Activated T-helper 2 cell treated with anti-CD3 and anti-CD28 coated beads, Interferon-gamma antibody, Interleukin-2, Interleukin-4, amounts not matched to agents 10 μg/mL and 5 μg/mL and 100 μg/mL, durations not matched to agents 14 hours and 24 hours and 36 hours (primary cell): ENCODE measurements at regions of chrX and their contacts with region 1.

Region 1: DNA sequence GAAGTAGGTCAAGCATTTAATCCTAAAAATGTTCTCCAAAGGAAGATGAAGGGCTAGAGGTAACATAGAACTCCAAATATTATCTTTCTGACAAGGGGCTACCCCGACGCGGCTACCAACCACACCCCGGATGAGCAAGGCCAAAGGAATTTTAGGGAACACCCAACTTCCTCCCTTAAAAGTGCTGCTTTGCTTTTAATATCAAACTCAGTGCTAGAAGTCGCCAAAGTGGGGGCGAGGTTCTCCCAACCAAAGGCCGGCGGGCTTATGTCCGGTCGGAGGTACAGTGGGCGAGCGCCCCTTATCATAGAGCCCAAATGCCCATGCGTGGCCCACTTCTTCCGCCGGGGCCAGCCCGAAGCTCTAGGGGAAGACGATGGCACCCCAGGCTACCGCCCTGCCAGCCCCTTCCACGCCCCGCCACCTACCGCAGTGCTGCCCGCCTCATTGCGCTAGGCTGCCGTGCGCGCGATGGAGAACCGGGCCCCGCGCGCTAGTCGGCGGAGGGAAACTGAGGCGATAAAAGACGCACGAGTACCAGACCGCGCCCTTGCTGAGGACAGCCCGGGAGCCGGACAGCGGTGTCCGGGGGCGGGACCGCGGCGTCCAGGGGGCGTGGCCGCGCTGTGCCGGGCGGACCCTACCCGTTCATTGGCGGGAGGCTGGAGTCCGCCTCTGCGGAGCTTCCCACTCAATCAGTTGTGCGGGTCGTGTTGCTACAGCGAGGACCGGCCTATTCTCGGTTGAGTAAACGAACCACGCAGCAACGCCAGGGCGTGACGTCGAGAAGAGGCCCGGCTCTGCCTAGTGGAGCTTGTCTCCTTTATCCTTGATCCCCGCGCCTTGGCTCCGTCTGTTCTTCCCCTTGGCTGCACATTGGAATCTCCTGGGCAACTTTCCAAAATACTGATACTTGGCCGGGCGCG is at the start of gene ACOT9:
- DNase-seq: peak; percentile 75
- H3K4me3 Mint-ChIP-seq: peak within 1 kb of the TSS; percentile 94
- H3K27ac Mint-ChIP-seq: peak within 1 kb of the TSS; percentile 90
- H3K4me1 Mint-ChIP-seq: peaks cover 19% of the 10 kb centered on the region
- H3K27me3 Mint-ChIP-seq: no peaks in the 10 kb centered on the region
- total RNA-seq, gene ACOT9: 75.2 and 76.0 TPM in 2 replicates

Region 2: DNA sequence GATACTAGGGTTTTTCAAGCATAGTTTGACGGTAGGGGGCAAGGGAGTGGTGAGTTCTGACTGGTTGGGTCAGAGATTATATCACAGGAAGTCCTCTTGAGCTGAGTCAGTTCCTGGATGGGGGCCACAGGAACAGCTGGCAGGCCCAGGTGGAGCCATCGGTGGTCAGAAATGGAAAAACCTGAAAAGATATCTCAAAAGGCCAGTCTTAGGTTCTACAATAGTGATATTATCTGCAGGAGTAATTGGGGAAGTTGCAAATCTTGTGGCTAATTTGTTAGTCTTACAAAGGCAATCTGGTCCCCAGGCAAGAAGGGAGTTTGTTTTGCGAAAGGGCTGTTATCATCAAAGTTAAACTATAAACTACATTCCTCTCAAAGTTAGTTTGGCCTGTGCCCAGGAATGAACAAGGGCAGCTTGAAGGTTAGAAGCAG is 249.0 kb before region 1 on chrX:
- intact Hi-C with region 1: no loop called
- DNase-seq: no peak
- H3K4me3 Mint-ChIP-seq: no peak overlapping the region
- H3K27ac Mint-ChIP-seq: no peak overlapping the region
- H3K4me1 Mint-ChIP-seq: peaks cover 3% of the 10 kb centered on the region
- H3K27me3 Mint-ChIP-seq: no peaks in the 10 kb centered on the region

Region 3: GRCh38 chrX:23732704-23733103 is 10.3 kb before region 1 on chrX:
- intact Hi-C with region 1: loop called (anchors 1 kb)
- DNase-seq: no peak
- H3K4me3 Mint-ChIP-seq: peak overlapping the region; percentile 57
- H3K27ac Mint-ChIP-seq: peak overlapping the region; percentile 79
- H3K4me1 Mint-ChIP-seq: peaks cover 27% of the 10 kb centered on the region
- H3K27me3 Mint-ChIP-seq: no peaks in the 10 kb centered on the region